OCI-LY7 (cell line): ENCODE measurements at regions of chr15 and their contacts with region 1.

Region 1: DNA sequence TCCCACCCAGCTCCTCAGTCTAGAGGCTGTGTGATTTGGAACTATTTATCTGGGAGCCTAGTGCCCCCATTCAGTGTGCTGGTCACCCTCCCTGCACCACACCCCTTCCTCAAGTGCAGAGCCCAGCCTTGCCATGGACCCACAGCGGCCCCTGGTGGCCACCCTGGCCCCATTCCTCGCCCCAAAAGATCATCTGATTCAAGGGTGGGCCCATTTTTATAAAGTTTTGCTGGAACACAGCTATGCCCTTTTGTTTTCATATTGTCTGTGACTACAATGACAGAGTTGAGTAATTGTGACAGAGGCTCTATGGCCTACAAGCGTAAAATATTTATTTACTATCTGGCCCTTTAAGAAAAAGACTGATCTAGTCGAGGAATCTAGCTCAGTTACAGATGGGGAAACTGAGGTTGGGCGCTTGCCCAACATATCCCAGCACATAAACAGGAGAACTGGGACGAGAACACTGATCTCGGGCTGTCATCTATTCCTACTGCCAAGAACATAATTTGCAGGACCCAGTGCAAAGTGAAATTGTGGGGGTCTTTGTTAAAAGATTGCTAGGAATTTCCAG is 1.8 kb downstream of the FES start:
- DNase-seq: peak; percentile 80
- H3K4me3 ChIP-seq: no peak overlapping the region
- H3K27ac ChIP-seq: no peak overlapping the region
- H3K4me1 ChIP-seq: peaks cover 12% of the 10 kb centered on the region
- CTCF ChIP-seq: peak; percentile 99

Region 2: GRCh38 chr15:90259524-90259923 is 626.6 kb before region 1 on chr15:
- CTCF ChIA-PET with region 1: no interaction called
- POLR2A ChIA-PET with region 1: no interaction called
- intact Hi-C with region 1: no loop called
- DNase-seq: no peak
- H3K4me3 ChIP-seq: no peak overlapping the region
- H3K27ac ChIP-seq: no peak overlapping the region
- H3K4me1 ChIP-seq: peaks cover 12% of the 10 kb centered on the region
- CTCF ChIP-seq: no peak

Region 3: GRCh38 chr15:90482124-90483011 is 403.8 kb before region 1 on chr15:
- CTCF ChIA-PET with region 1: interaction called, 3 read pairs
- POLR2A ChIA-PET with region 1: no interaction called
- intact Hi-C with region 1: loop called (anchors 5 kb)
- DNase-seq: peak; percentile 60
- H3K4me3 ChIP-seq: no peak overlapping the region
- H3K27ac ChIP-seq: no peak overlapping the region
- H3K4me1 ChIP-seq: peaks cover 22% of the 10 kb centered on the region
- CTCF ChIP-seq: peak; percentile 94

Region 4: GRCh38 chr15:90691982-90692773 is 193.9 kb before region 1 on chr15:
- CTCF ChIA-PET with region 1: no interaction called
- POLR2A ChIA-PET with region 1: no interaction called
- intact Hi-C with region 1: loop called (anchors 1 kb)
- DNase-seq: no peak
- H3K4me3 ChIP-seq: no peak overlapping the region
- H3K27ac ChIP-seq: no peak overlapping the region
- H3K4me1 ChIP-seq: no peaks in the 10 kb centered on the region
- CTCF ChIP-seq: no peak

Region 5: GRCh38 chr15:90818251-90819210 is 67.6 kb before region 1 on chr15:
- CTCF ChIA-PET with region 1: interaction called, 4 read pairs
- POLR2A ChIA-PET with region 1: no interaction called
- intact Hi-C with region 1: loop called (anchors 1 kb)
- DNase-seq: peak; percentile 86
- H3K4me3 ChIP-seq: peak overlapping the region; percentile 10
- H3K27ac ChIP-seq: peak overlapping the region; percentile 67
- H3K4me1 ChIP-seq: peaks cover 33% of the 10 kb centered on the region
- CTCF ChIP-seq: peak; percentile 75